KBM-7 (cell line): ENCODE measurements at regions of chr17 and their contacts with region 1.

Region 1: GRCh38 chr17:47831003-47831933 is at the starts of genes LRRC46 and MRPL10:
- DNase-seq: peak; percentile 97

Region 2: GRCh38 chr17:47663912-47664625 is 167.2 kb before region 1 on chr17:
- in situ Hi-C with region 1: no loop called
- DNase-seq: peak; percentile 78

Region 3: DNA sequence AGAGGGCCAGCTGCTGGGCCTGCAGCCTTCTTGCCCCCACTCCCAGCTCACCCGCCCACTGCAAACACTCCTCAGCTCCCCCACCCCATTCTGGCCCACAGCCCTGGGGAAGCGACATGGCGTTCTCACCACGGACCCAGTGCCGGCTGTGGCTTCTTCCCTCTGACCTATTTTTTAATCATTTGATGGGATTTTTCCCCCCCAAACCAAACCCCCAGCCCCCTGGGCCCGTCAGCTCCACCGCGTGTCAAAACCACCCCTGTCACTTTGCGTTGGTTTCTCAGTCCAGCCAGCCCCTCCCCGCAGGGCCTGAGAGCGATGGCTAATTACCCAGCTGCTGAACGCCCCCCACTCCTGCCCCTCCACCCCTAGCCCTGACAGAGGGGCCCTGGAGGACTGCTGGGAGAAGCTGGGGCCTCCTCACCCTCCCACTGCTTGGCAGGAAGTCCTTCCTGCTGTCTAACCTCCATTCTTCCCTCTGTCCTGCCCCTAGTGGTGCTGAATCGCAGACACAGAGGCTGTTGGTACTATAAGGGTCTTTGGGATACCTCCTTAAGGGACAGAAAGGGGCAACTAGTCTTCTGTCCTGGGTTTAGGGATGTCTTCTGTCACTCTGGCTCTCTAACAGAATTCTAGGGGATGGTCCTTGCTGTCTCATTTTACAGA is 105.7 kb before region 1 on chr17:
- in situ Hi-C with region 1: no loop called
- DNase-seq: no peak

Region 4: DNA sequence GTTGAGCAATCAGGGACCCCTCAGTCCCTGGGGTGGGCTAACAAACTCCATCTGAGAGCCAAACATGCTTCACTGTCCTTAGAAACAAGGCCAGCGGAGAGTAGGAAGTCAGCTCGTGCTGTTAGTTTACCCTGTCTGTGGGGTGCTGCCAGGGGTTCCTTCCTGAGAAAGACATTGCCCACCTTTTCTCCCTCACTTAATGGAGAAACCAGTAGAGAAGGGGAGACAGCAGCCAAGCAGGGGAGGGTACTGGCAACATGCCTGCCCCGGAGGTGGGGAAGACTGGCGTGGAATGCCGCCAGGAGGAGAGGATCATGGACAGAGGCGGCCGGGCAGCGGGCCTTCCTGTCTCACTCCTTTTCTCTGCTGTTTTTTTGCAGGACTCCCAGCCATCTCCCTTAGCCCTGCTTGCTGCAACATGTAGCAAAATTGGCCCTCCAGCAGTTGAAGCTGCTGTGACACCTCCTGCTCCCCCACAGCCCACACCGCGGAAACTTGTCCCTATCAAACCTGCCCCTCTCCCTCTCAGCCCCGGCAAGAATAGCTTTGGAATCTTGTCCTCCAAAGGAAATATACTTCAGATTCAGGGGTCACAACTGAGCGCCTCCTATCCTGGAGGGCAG is 84.6 kb after region 1 on chr17:
- in situ Hi-C with region 1: no loop called
- DNase-seq: no peak

Region 5: GRCh38 chr17:47970704-47971463 is 139.6 kb after region 1 on chr17 and contains the start of gene CDK5RAP3:
- in situ Hi-C with region 1: loop called (anchors 25 kb)
- DNase-seq: peak; percentile 100

Region 6: GRCh38 chr17:48543107-48543853 is 712.0 kb after region 1 on chr17:
- in situ Hi-C with region 1: no loop called
- DNase-seq: peak; percentile 62